ENCODE measurements at regions of chr3 and their contacts with region 1.

Region 1: GRCh38 chr3:184174646-184175492 is at the start of gene AP2M1:
- DNase-seq: peak; percentile 97 to 99 (median 98)
- H3K4me3 ChIP-seq: peak within 1 kb of the TSS; percentile 82 to 98 (median 91)
- H3K4me3 Mint-ChIP-seq: peak within 1 kb of the TSS; percentile 94 to 97
- H3K27ac ChIP-seq: peak within 1 kb of the TSS; percentile 17 to 84
- H3K27ac Mint-ChIP-seq: peak within 1 kb of the TSS; percentile 76 to 94 (median 86)
- H3K4me1 ChIP-seq: peaks cover 27 to 33% of the 10 kb centered on the region in 2 donors
- H3K4me1 Mint-ChIP-seq: peaks cover 34% of the 10 kb centered on the region
- H3K27me3 ChIP-seq: no peaks in the 10 kb centered on the region
- H3K27me3 Mint-ChIP-seq: peaks cover 0 to 3% (median 3%) of the 10 kb centered on the region in 3 donors
- CTCF ChIP-seq: no peak
- polyA plus RNA-seq, gene AP2M1: 283 to 327 (median 295) TPM

Region 2: GRCh38 chr3:183629546-183630301 is 545.1 kb before region 1 on chr3:
- intact Hi-C with region 1: no loop called
- DNase-seq: no peak
- H3K4me3 ChIP-seq: no peak overlapping the region
- H3K4me3 Mint-ChIP-seq: no peak overlapping the region
- H3K27ac ChIP-seq: no peak overlapping the region
- H3K27ac Mint-ChIP-seq: no peak overlapping the region
- H3K4me1 ChIP-seq: peaks cover under 1 to 2% of the 10 kb centered on the region in 2 donors
- H3K4me1 Mint-ChIP-seq: peaks cover 3% of the 10 kb centered on the region
- H3K27me3 ChIP-seq: no peaks in the 10 kb centered on the region
- H3K27me3 Mint-ChIP-seq: peaks cover 0 to 2% (median 2%) of the 10 kb centered on the region in 3 donors
- CTCF ChIP-seq: no peak

Region 3: GRCh38 chr3:183911763-183912499 is 262.9 kb before region 1 on chr3:
- intact Hi-C with region 1: no loop called
- DNase-seq: no peak
- H3K4me3 ChIP-seq: no peak overlapping the region
- H3K4me3 Mint-ChIP-seq: no peak overlapping the region
- H3K27ac ChIP-seq: no peak overlapping the region
- H3K27ac Mint-ChIP-seq: no peak overlapping the region
- H3K4me1 ChIP-seq: no peaks in the 10 kb centered on the region
- H3K4me1 Mint-ChIP-seq: no peaks in the 10 kb centered on the region
- H3K27me3 ChIP-seq: no peaks in the 10 kb centered on the region
- H3K27me3 Mint-ChIP-seq: peaks cover 5 to 11% (median 5%) of the 10 kb centered on the region in 3 donors
- CTCF ChIP-seq: no peak

Region 4: GRCh38 chr3:184017672-184018423 is 157.0 kb before region 1 on chr3 and contains the start of gene ABCC5:
- intact Hi-C with region 1: loop called in 1 of 2 experiments (anchors 5 kb)
- DNase-seq: peak; percentile 75 to 85 (median 80)
- H3K4me3 ChIP-seq: peak within 1 kb of the TSS; percentile 88 to 100 (median 100)
- H3K4me3 Mint-ChIP-seq: peak within 1 kb of the TSS; percentile 96 to 97
- H3K27ac ChIP-seq: peak within 1 kb of the TSS; percentile 43 to 82
- H3K27ac Mint-ChIP-seq: peak within 1 kb of the TSS; percentile 30 to 94 (median 81)
- H3K4me1 ChIP-seq: peaks cover 36 to 45% of the 10 kb centered on the region in 2 donors
- H3K4me1 Mint-ChIP-seq: peaks cover 42% of the 10 kb centered on the region
- H3K27me3 ChIP-seq: no peaks in the 10 kb centered on the region
- H3K27me3 Mint-ChIP-seq: peaks cover 5 to 8% (median 7%) of the 10 kb centered on the region in 3 donors
- CTCF ChIP-seq: peak; percentile 85
- polyA plus RNA-seq, gene ABCC5: 6.2 to 30.9 (median 7.7) TPM

Region 5: GRCh38 chr3:184185461-184186308 is 10.8 kb after region 1 on chr3 and contains the start of gene ABCF3:
- intact Hi-C with region 1: loop called (anchors 1 kb)
- DNase-seq: peak; percentile 98 to 99 (median 99)
- H3K4me3 ChIP-seq: peak within 1 kb of the TSS; percentile 60 to 94 (median 83)
- H3K4me3 Mint-ChIP-seq: peak within 1 kb of the TSS; percentile 97 to 98
- H3K27ac ChIP-seq: peak within 1 kb of the TSS; percentile 82 to 89
- H3K27ac Mint-ChIP-seq: peak within 1 kb of the TSS; percentile 95 to 99 (median 96)
- H3K4me1 ChIP-seq: peaks cover 17 to 25% of the 10 kb centered on the region in 2 donors
- H3K4me1 Mint-ChIP-seq: peaks cover 23% of the 10 kb centered on the region
- H3K27me3 ChIP-seq: no peaks in the 10 kb centered on the region
- H3K27me3 Mint-ChIP-seq: no peaks in the 10 kb centered on the region
- CTCF ChIP-seq: no peak
- polyA plus RNA-seq, gene ABCF3: 13.5 to 74.8 (median 13.9) TPM

Region 6: GRCh38 chr3:184298759-184299496 is 124.1 kb after region 1 on chr3 and contains the start of gene PSMD2:
- intact Hi-C with region 1: loop called (anchors 2 to 5 kb)
- DNase-seq: peak; percentile 94 to 95 (median 95)
- H3K4me3 ChIP-seq: peak within 1 kb of the TSS; percentile 82 to 90 (median 83)
- H3K4me3 Mint-ChIP-seq: peak within 1 kb of the TSS; percentile 91 to 97
- H3K27ac ChIP-seq: peak within 1 kb of the TSS; percentile 53 to 71
- H3K27ac Mint-ChIP-seq: peak within 1 kb of the TSS; percentile 86 to 95 (median 91)
- H3K4me1 ChIP-seq: peaks cover 16 to 19% of the 10 kb centered on the region in 2 donors
- H3K4me1 Mint-ChIP-seq: peaks cover 21% of the 10 kb centered on the region
- H3K27me3 ChIP-seq: no peaks in the 10 kb centered on the region
- H3K27me3 Mint-ChIP-seq: peaks cover 0 to 3% (median 0%) of the 10 kb centered on the region in 3 donors
- CTCF ChIP-seq: no peak
- polyA plus RNA-seq, gene PSMD2: 138 to 186 (median 167) TPM

Region 7: DNA sequence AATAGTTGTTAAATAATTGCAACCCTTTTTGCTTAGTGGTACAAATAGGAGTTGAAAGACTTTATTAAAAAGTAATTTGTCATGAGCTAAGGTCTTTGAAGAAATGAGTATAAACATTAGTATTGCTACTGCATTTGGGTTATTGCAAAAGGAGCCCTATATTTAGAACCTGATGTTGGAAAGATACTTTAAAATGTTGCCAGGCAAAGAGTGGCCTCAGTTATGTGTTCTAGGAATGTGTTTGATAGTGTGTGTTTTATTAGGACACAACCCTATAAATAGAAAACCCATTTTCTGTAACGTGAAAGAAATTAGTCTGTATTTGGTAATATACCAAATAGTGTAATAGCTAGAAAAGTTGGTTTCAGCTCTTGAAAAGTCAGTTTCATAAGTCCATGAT is 647.8 kb after region 1 on chr3:
- intact Hi-C with region 1: no loop called
- DNase-seq: no peak
- H3K4me3 ChIP-seq: no peak overlapping the region
- H3K4me3 Mint-ChIP-seq: no peak overlapping the region
- H3K27ac ChIP-seq: no peak overlapping the region
- H3K27ac Mint-ChIP-seq: no peak overlapping the region
- H3K4me1 ChIP-seq: peaks cover 4 to 7% of the 10 kb centered on the region in 2 donors
- H3K4me1 Mint-ChIP-seq: peaks cover 15% of the 10 kb centered on the region
- H3K27me3 ChIP-seq: no peaks in the 10 kb centered on the region
- H3K27me3 Mint-ChIP-seq: no peaks in the 10 kb centered on the region
- CTCF ChIP-seq: no peak

Measured in CD14-positive monocyte (primary cell).